MCF 10A (cell line): ENCODE measurements at regions of chr6 and their contacts with region 1.

Region 1: DNA sequence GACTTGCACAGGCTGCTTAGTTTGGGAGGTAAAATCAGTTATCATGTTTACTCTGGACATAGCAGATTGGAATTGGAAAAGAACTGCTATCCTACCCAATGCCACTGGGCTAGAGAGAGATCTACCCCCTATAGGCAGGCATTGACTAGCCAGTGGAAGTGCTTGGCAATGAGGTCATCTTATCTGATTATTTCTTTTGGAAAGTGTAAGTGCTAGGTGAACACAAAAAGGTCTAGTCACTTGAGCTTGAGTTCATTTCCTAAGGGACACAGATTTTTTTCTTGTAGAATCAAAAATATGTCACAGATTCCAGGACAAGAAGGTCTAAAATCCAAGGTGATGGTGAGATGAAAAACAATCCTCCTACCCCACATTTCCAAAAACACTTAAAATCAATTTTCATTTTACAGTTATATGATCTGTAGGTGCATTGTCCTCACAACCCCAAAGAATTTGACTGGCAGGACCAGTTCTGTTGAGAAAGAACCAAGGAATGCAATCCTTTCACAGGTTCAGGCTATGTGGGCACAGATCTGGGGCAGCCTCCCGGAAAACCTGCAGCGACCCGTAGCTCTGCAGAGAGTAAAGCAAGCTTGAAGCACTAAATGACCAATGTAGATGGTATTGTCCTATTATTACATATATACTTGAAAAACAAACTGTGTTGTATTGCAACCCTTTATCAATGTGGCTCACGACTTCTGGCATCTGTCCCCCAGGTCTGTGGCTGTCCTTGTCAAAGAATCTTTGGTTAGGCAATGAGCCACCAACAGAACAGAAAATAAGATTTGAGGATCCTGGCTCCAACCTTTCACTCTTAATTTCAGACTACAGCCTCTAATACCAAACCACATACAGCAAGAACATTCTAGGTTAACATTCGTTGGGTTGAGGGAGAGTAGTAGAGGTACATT is 67.3 kb upstream of the ADTRP start:
- DNase-seq: no peak
- H3K4me3 Mint-ChIP-seq: no peak overlapping the region
- H3K27ac Mint-ChIP-seq: no peak overlapping the region
- H3K4me1 Mint-ChIP-seq: no peaks in the 10 kb centered on the region
- H3K27me3 Mint-ChIP-seq: no peaks in the 10 kb centered on the region
- CTCF ChIP-seq: no peak

Region 2: DNA sequence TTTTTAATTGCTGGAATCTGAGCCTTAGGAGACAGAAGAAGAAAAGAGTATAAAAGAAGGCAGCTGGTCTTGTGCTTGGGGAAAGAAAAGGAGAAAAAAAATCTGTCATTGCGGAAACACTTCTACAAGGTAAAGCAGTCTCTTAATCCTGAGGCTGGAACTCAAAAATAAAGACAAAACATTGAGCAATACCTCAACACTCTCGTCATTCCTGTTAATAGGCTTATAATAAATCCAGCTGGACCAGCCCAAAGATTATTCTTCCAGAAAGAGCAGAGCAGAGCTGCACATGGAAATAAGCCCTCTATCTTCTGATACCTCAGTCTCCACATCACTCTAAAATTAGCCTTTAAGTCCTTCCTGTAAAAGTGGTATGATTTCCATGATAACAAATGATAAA is 104.2 kb after region 1 on chr6:
- CTCF ChIA-PET with region 1: no interaction called
- POLR2A ChIA-PET with region 1: no interaction called
- intact Hi-C with region 1: loop called (anchors 1 kb)
- DNase-seq: no peak
- H3K4me3 Mint-ChIP-seq: no peak overlapping the region
- H3K27ac Mint-ChIP-seq: no peak overlapping the region
- H3K4me1 Mint-ChIP-seq: no peaks in the 10 kb centered on the region
- H3K27me3 Mint-ChIP-seq: no peaks in the 10 kb centered on the region
- CTCF ChIP-seq: no peak

Region 3: GRCh38 chr6:12097791-12098190 is 251.9 kb after region 1 on chr6:
- CTCF ChIA-PET with region 1: no interaction called
- POLR2A ChIA-PET with region 1: no interaction called
- intact Hi-C with region 1: no loop called
- DNase-seq: no peak
- H3K4me3 Mint-ChIP-seq: no peak overlapping the region
- H3K27ac Mint-ChIP-seq: no peak overlapping the region
- H3K4me1 Mint-ChIP-seq: peaks cover 18% of the 10 kb centered on the region
- H3K27me3 Mint-ChIP-seq: no peaks in the 10 kb centered on the region
- CTCF ChIP-seq: no peak